ENCODE measurements at regions of chr13 and their contacts with region 1.

Region 1: DNA sequence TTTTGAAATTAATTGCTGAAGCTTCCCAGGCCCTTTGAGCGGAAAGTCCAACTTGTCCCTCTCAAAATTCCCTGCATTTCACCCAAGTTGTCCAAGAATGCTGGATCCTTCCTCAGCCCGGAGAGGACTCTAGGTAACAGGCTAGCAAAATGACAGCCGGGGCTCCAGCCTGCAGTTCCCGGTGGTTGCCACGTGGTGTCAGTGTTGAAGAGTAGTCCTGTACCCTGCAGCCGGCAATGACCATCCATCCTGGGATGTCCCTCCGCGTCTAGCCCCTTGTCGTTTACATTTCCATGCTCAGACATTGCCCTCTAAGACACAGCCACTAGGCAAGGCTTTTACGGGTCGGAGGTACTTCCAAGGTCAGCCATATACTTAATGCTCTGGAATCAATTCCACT is 31.4 kb upstream of the MTIF3 start:
- DNase-seq: peak; percentile 56
- H3K27ac ChIP-seq: no peak overlapping the region
- CTCF ChIP-seq: peak; percentile 63

Region 2: DNA sequence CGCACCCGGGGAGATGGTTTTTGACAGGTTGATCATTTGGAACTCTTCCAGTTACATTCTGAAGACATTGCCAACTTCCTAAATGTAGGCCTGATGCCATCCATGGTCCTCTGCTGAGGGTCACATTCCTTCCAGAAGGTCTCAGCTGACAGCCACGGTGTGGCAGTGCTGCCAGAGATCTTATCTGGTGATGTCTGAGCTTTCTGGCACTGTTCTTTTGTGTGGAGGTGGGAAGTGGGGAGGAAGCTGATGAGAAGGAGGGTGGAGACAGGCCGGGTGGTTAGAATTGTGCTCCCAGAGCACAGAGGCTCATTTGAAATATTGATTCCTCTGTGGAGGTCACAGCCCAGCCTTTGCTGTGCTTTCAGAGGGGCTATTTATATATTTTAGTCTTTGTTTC is 15.3 kb before region 1 on chr13:
- CTCF ChIA-PET with region 1: no interaction called
- POLR2A ChIA-PET with region 1: no interaction called
- DNase-seq: no peak
- H3K27ac ChIP-seq: no peak overlapping the region
- CTCF ChIP-seq: no peak

Region 3: GRCh38 chr13:28658796-28659620 is 1177.2 kb after region 1 on chr13 and contains the start of gene POMP:
- CTCF ChIA-PET with region 1: interaction called, 11 read pairs
- POLR2A ChIA-PET with region 1: no interaction called
- DNase-seq: peak; percentile 87
- H3K27ac ChIP-seq: peak within 1 kb of the TSS; percentile 81
- CTCF ChIP-seq: no peak

Measured in RWPE1 (cell line).